ENCODE measurements at regions of chr9 and their contacts with region 1.

Region 1: DNA sequence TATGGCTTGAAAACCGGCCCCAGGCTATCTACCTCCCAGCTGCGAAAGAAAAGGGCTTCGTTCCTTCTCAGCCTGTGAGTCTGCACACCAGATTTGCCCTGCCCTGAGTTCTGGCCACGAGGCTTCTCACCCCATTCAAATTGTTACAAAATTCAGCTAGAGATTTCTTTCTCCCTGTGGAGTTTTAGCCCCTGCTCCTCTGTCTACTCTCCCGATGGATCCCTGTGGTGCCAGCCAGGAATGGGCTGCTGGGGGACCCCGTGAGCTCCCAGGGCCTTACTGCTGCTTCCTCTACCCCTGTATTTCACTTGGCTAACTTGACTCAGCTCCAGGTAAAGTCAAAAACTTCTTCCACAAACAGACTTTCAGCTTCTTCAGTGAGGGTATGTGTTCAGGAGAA is 9.3 kb upstream of the RNF20 start:
- DNase-seq: no peak
- H3K4me3 ChIP-seq: no peak overlapping the region
- H3K27ac ChIP-seq: no peak overlapping the region
- H3K4me1 ChIP-seq: no peaks in the 10 kb centered on the region
- H3K27me3 ChIP-seq: no peaks in the 10 kb centered on the region
- CTCF ChIP-seq: no peak
- EP300 ChIP-seq: no peak
- POLR2A ChIP-seq: no peak

Region 2: DNA sequence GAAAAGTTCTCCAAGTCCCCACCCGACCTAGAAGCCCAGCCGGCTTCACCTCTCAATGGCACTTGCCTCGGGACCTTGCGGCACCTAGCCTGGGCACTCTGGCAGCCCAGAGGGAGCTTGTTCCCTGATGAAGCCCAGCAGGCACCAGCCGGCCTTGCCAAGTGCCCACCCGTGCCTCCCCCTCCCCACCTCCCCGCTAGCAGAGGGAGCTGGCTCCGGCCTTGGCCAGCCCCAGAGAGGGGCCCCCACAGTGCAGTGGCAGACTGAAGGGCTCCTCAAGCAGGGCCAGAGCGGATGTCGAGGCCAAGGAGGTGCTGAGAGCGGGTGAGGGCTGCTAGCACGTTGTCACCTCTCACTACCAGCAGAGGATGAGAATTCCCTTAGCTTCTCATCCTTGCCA is 984.0 kb before region 1 on chr9:
- in situ Hi-C with region 1: no loop called
- intact Hi-C with region 1: no loop called
- DNase-seq: no peak
- H3K4me3 ChIP-seq: no peak overlapping the region
- H3K27ac ChIP-seq: no peak overlapping the region
- H3K4me1 ChIP-seq: no peaks in the 10 kb centered on the region
- H3K27me3 ChIP-seq: no peaks in the 10 kb centered on the region
- CTCF ChIP-seq: no peak
- EP300 ChIP-seq: no peak
- POLR2A ChIP-seq: no peak

Region 3: DNA sequence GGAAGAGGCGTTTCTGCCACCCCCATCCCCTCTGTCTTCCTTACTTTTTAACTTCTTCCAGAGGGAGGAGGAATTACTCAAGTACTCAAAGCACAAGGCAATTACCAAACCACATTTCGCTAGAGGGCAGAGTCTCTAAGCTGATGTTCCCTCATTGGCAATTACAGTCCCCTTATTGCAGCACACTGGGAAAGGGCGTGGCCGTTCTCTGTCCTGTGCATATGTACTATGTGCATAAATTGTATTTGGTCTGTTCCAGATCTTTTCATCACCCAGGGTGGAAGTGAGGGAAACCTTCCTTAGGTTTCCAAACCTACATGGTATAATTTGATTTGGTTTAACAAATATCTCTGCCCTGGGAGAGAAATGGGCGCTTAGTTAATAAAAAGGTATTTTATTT is 59.0 kb before region 1 on chr9:
- in situ Hi-C with region 1: loop called in 2 of 4 experiments (anchors 5 kb)
- intact Hi-C with region 1: loop called (anchors 2 kb)
- DNase-seq: peak; percentile 84
- H3K4me3 ChIP-seq: no peak overlapping the region
- H3K27ac ChIP-seq: no peak overlapping the region
- H3K4me1 ChIP-seq: peaks cover 0 to 11% (median 2%) of the 10 kb centered on the region in 4 donors
- H3K27me3 ChIP-seq: no peaks in the 10 kb centered on the region
- CTCF ChIP-seq: peak; percentile 13 to 71 (median 42)
- EP300 ChIP-seq: no peak
- POLR2A ChIP-seq: no peak